Sciatic nerve (tissue), 2 donors: ENCODE measurements at regions of chr4 and their contacts with region 1.

Region 1: DNA sequence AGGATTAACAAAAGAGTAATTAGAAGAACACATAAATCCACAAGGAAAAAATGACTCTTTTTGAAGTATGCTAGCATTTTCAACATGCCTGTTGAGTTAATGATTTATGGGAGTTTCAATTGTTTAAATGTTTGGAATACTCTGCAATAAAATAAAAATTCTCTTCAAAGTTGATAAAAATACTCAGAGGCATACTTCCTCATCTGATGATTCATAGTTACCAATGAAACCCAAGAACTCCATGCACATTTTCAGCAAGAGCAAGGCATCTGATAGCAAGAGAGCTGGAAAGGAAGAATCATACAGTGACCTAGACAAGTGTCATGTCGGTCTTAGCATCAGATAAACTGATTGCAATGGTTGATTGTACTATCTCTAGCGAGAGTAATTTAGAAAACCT is 443.7 kb upstream of the ATOH1 start:
- DNase-seq: no peak
- ATAC-seq: no peak

Region 2: DNA sequence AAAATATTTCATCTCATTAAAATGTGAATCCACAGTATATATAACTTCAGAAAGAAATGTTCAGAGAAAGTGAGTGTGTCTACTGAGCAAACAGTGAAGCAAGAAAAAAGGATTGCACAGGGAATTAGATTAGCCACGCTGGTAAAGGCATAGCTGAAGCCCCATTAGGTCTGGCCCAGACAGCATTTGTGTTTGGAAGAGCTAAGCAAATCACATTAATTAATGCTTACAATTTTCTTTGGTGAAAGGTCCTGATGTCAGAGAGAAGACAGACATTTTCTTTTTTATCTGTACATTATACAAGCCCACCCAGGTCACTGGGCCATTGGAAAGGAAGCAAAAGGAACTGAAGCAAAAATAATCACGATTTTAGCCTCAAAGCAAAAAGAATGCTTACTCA is 726.6 kb before region 1 on chr4:
- intact Hi-C with region 1: loop called (anchors 10 kb)
- DNase-seq: no peak
- ATAC-seq: no peak

Region 3: DNA sequence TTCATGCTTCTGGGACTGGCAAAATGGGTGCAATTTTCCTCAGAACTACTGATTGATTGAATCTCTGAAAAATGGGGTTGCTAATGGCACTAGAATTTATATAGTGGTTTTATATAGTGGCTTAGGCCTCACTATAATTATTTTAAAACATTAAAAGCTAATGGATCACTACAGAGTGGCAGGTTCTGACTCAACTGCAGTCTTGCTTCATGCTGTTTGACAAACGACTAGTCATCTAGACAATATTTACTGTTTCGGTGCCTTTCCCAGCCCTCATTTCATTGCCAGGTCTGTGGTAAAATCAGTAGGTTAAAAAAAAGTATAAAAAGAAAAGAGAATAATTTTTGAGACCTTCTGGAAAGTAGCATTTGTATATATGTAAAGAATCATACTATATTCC is 90.8 kb after region 1 on chr4:
- intact Hi-C with region 1: no loop called
- DNase-seq: no peak
- ATAC-seq: no peak